PC-3 (cell line): ENCODE measurements at regions of chr4 and their contacts with region 1.

Region 1: GRCh38 chr4:104728380-104729122 is 233.9 kb upstream of the CXXC4 start:
- DNase-seq: peak; percentile 94
- ATAC-seq: peak; percentile 94
- H3K4me3 ChIP-seq: peak overlapping the region; percentile 28; the same call in 1 of the 2 replicates
- H3K27ac ChIP-seq: peak overlapping the region; percentile 95
- H3K4me1 ChIP-seq: peaks cover 33% of the 10 kb centered on the region
- H3K27me3 ChIP-seq: no peaks in the 10 kb centered on the region
- CTCF ChIP-seq: no peak

Region 2: DNA sequence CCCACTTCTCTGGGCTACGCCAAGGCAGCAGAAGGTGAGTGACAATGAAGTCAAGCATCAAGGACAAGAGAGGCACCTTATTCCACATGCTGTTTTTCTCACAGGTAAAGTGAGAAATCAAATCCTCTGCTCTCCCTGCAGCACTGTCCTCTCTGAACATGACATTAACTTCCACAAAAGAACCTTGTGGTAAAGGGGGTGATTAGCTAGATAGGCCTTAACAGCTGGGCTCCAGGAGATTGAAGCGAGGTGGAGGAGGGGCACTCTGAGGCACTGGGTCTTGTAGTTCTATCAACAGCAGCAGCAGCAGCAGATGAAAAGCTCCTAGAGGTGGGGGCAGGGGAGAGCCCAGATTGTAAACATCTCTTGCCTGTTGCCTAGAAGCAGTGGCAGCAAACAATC is 137.0 kb before region 1 on chr4:
- CTCF ChIA-PET with region 1: no interaction called
- POLR2A ChIA-PET with region 1: no interaction called
- intact Hi-C with region 1: no loop called
- DNase-seq: no peak
- ATAC-seq: no peak
- H3K4me3 ChIP-seq: no peak overlapping the region
- H3K27ac ChIP-seq: no peak overlapping the region
- H3K4me1 ChIP-seq: no peaks in the 10 kb centered on the region
- H3K27me3 ChIP-seq: peaks cover 4% of the 10 kb centered on the region; the same call in 1 of the 2 replicates
- CTCF ChIP-seq: no peak

Region 3: DNA sequence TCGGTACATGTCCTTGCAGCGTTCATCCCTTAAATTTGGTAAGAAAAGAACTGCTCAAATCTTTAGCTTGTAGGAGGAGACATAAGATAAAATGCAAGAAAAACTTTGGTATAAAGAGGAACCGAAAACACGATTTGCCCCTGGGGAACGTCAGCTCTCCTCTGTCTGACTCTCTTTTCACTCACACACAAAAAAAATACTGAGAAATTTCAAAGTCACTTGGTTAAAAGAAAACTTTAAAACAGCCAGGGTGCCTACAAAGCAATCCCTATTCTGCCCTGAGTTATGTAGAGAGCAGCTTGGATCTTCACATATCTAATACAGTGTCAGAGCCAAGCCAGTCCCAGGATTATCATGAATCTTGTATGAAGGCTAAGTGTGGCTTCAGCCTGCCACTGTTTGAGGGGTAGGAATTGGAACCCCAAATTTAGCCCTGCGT is 14.7 kb after region 1 on chr4:
- CTCF ChIA-PET with region 1: no interaction called
- POLR2A ChIA-PET with region 1: no interaction called
- intact Hi-C with region 1: loop called (anchors 2 kb)
- DNase-seq: no peak
- ATAC-seq: no peak
- H3K4me3 ChIP-seq: no peak overlapping the region
- H3K27ac ChIP-seq: no peak overlapping the region
- H3K4me1 ChIP-seq: peaks cover 16% of the 10 kb centered on the region
- H3K27me3 ChIP-seq: no peaks in the 10 kb centered on the region
- CTCF ChIP-seq: no peak

Region 4: DNA sequence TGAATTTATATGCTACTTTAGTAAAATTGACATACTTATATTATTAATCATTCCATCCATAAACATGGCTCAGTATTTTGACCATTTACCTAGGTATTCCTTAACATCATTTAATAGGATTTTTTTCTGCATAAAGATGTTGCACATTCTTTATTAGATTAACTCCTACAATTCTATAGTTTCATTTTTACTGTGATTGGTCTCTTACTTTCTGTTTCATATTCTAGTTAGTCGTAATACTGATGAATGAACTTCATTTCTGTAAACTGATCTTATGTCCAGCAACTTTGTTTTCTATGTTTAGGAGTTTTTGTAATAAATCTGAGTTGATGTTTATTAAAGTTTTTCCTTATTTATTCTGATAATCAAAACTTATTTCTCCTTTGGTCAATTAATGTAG is 44.3 kb after region 1 on chr4:
- CTCF ChIA-PET with region 1: no interaction called
- POLR2A ChIA-PET with region 1: no interaction called
- intact Hi-C with region 1: loop called (anchors 1 kb)
- DNase-seq: peak; percentile 2
- ATAC-seq: no peak
- H3K4me3 ChIP-seq: peak overlapping the region; percentile 15; the same call in 1 of the 2 replicates
- H3K27ac ChIP-seq: peak overlapping the region; percentile 26
- H3K4me1 ChIP-seq: peaks cover 29% of the 10 kb centered on the region
- H3K27me3 ChIP-seq: no peaks in the 10 kb centered on the region
- CTCF ChIP-seq: no peak

Region 5: GRCh38 chr4:104795264-104795939 is 66.9 kb after region 1 on chr4:
- CTCF ChIA-PET with region 1: no interaction called
- POLR2A ChIA-PET with region 1: no interaction called
- intact Hi-C with region 1: no loop called
- DNase-seq: no peak
- ATAC-seq: no peak
- H3K4me3 ChIP-seq: no peak overlapping the region
- H3K27ac ChIP-seq: no peak overlapping the region
- H3K4me1 ChIP-seq: no peaks in the 10 kb centered on the region
- H3K27me3 ChIP-seq: no peaks in the 10 kb centered on the region
- CTCF ChIP-seq: no peak

Region 6: GRCh38 chr4:104815665-104816064 is 87.1 kb after region 1 on chr4:
- CTCF ChIA-PET with region 1: no interaction called
- POLR2A ChIA-PET with region 1: no interaction called
- intact Hi-C with region 1: loop called (anchors 1 kb)
- DNase-seq: peak; percentile 66
- ATAC-seq: peak; percentile 97
- H3K4me3 ChIP-seq: no peak overlapping the region
- H3K27ac ChIP-seq: no peak overlapping the region
- H3K4me1 ChIP-seq: peaks cover 13% of the 10 kb centered on the region
- H3K27me3 ChIP-seq: no peaks in the 10 kb centered on the region
- CTCF ChIP-seq: no peak